Ascending aorta (tissue), 2 donors: ENCODE measurements at regions of chr10 and their contacts with region 1.

Region 1: DNA sequence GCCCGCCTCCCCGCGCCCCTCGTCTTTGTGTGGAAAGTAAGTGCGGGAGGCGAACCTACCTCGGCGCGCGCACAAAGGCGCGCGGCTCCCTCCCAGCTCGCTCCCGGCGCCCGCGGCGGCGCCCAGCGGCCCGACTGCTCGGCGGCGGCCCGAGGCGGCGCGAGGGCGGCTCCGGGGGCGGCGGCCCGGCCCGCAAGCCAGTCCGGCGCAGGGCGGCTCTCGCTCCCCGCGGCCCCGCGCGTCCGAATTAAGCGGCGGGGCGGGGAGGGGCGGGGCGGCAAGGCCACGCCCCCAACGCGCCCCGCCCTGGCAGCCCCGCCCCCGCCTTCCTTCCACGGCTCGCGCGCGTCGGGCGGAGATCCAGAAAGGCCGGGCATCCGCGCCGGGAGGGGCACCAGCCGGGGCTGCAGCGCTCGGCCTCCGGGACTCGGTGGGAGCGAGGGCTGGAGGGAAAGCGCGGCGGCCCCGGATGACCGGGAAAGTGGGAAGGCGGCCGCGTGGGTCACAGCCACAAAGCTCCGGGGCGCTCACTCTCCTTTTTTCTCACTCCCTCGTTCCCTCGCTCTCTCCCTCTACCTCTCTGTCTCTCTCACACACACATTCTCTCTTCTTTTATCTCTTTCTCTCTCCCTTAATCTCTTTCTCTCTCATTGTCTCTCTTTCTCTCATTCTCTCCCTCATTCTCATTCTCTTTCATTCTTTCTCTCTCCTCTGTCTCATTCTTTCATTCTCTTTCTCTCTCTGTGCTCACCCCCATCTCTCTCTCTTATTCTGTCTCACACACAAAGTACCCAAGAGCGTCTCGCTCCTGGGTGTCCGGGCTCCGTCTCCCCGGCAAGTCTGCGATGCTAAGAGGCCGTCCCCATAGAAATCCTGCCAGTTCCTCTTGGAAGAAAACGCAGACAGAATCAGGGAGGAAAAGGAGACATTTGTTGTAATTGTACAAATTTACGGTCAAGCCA is 170.2 kb downstream of the FAM107B start:
- DNase-seq: peak; percentile 22 to 90
- H3K4me3 ChIP-seq: peak overlapping the region; percentile 78 to 90
- H3K27ac ChIP-seq: peak overlapping the region; percentile 69 to 79
- H3K4me1 ChIP-seq: peaks cover 0 to 12% of the 10 kb centered on the region in 2 donors
- H3K27me3 ChIP-seq: no peaks in the 10 kb centered on the region
- CTCF ChIP-seq: no peak

Region 2: GRCh38 chr10:14536241-14537213 is 67.9 kb before region 1 on chr10:
- intact Hi-C with region 1: loop called (anchors 5 kb)
- DNase-seq: peak in 1 of 2 donors; percentile 80
- H3K4me3 ChIP-seq: peak overlapping the region in 1 of 2 donors; percentile 46
- H3K27ac ChIP-seq: peak overlapping the region; percentile 28 to 42
- H3K4me1 ChIP-seq: no peaks in the 10 kb centered on the region
- H3K27me3 ChIP-seq: no peaks in the 10 kb centered on the region
- CTCF ChIP-seq: peak; percentile 39 to 56 (median 55)

Region 3: GRCh38 chr10:14560274-14560673 is 44.2 kb before region 1 on chr10:
- intact Hi-C with region 1: no loop called
- DNase-seq: no peak
- H3K4me3 ChIP-seq: no peak overlapping the region
- H3K27ac ChIP-seq: no peak overlapping the region
- H3K4me1 ChIP-seq: peaks cover 0 to 13% of the 10 kb centered on the region in 2 donors
- H3K27me3 ChIP-seq: no peaks in the 10 kb centered on the region
- CTCF ChIP-seq: no peak

Region 4: GRCh38 chr10:14653271-14654228 is 49.1 kb after region 1 on chr10:
- intact Hi-C with region 1: loop called (anchors 1 kb)
- DNase-seq: no peak
- H3K4me3 ChIP-seq: peak overlapping the region in 1 of 2 donors; percentile 7
- H3K27ac ChIP-seq: peak overlapping the region; percentile 67 to 80
- H3K4me1 ChIP-seq: peaks cover 8 to 17% of the 10 kb centered on the region in 2 donors
- H3K27me3 ChIP-seq: no peaks in the 10 kb centered on the region
- CTCF ChIP-seq: no peak

Region 5: DNA sequence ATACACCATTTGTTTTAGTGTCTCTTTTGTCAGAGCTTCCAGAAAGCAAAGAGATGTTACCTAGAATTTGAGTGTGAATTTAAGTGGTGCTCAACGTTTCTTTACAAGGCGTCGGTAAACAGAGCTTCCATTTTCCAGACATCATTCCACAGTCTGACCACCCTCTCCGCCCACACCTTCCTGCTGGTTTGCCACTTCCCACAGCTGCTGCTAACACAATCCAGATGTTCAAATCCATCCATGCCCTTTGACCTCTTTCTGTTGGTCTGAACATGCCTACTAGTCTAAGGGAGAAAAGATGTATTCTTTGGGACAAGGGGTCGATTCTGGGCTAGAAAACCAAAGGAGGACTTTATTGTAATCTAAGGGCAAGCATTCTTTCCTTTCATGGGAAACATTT is 84.1 kb after region 1 on chr10:
- intact Hi-C with region 1: no loop called
- DNase-seq: no peak
- H3K4me3 ChIP-seq: no peak overlapping the region
- H3K27ac ChIP-seq: no peak overlapping the region
- H3K4me1 ChIP-seq: no peaks in the 10 kb centered on the region
- H3K27me3 ChIP-seq: no peaks in the 10 kb centered on the region
- CTCF ChIP-seq: no peak

Region 6: GRCh38 chr10:14751014-14751896 is 146.8 kb after region 1 on chr10:
- intact Hi-C with region 1: loop called (anchors 5 kb)
- DNase-seq: peak in 1 of 2 donors; percentile 79
- H3K4me3 ChIP-seq: no peak overlapping the region
- H3K27ac ChIP-seq: peak overlapping the region; percentile 56 to 73
- H3K4me1 ChIP-seq: peaks cover 9 to 40% of the 10 kb centered on the region in 2 donors
- H3K27me3 ChIP-seq: no peaks in the 10 kb centered on the region
- CTCF ChIP-seq: no peak

Region 7: GRCh38 chr10:14959276-14960057 is 355.0 kb after region 1 on chr10 and contains the start of gene MEIG1:
- intact Hi-C with region 1: loop called (anchors 10 kb)
- DNase-seq: peak; percentile 76 to 97
- H3K4me3 ChIP-seq: peak within 1 kb of the TSS; percentile 76 to 92
- H3K27ac ChIP-seq: peak within 1 kb of the TSS; percentile 92 to 97
- H3K4me1 ChIP-seq: peaks cover 0 to 3% of the 10 kb centered on the region in 2 donors
- H3K27me3 ChIP-seq: no peaks in the 10 kb centered on the region
- CTCF ChIP-seq: no peak
- total RNA-seq, gene MEIG1: not detected